CD8-positive, alpha-beta T cell (primary cell): ENCODE measurements at regions of chr5 and their contacts with region 1.

Region 1: DNA sequence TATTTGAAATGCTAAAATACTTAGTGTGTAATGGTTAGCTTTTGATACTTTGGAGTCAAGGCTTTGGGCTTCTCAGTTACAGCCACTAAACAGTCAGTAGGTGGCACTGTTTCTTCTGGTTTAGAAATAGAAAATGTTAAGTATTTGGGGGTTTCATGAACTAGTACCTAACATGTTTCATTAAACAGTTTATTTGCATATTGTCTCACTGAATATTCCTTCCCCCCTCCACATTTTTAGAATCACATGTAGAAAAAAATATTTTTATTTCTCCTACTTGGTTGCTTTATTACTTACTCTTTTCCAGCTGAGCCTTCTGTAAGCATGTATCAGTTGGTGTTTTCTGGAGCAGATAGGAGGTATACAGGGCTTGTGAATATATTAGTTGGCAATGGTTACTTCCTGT is 48.0 kb downstream of the IPO11 start:
- DNase-seq: peak in 2 of 9 experiments; percentile 45 to 54
- ATAC-seq: no peak
- H3K4me3 ChIP-seq: no peak overlapping the region
- H3K4me3 Mint-ChIP-seq: no peak overlapping the region
- H3K27ac ChIP-seq: no peak overlapping the region
- H3K27ac Mint-ChIP-seq: no peak overlapping the region
- H3K4me1 ChIP-seq: no peaks in the 10 kb centered on the region
- H3K4me1 Mint-ChIP-seq: peaks cover 3% of the 10 kb centered on the region
- H3K27me3 ChIP-seq: no peaks in the 10 kb centered on the region
- H3K27me3 Mint-ChIP-seq: no peaks in the 10 kb centered on the region
- CTCF ChIP-seq: peak; percentile 82

Region 2: DNA sequence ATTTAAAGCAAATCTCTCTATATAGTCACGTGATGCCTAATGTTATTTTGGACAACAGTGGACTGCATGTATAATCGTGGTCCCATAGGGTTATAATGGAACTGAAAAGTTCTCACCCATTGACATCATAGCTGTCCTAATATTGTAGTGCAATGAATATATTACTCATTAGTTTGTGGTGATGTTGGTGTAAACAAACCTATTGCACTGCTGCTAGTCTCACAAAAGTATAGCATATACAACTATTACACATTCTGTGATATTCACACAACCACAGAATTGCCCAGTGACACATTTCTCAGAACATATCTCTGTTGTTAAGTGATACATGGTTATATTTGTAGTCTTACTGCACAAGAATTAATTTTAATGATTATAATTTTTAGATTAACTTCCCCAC is 10.3 kb before region 1 on chr5:
- CTCF ChIA-PET with region 1: interaction called, 17 read pairs
- POLR2A ChIA-PET with region 1: interaction called, 3 read pairs
- intact Hi-C with region 1: no loop called
- DNase-seq: no peak
- ATAC-seq: no peak
- H3K4me3 ChIP-seq: no peak overlapping the region
- H3K4me3 Mint-ChIP-seq: no peak overlapping the region
- H3K27ac ChIP-seq: no peak overlapping the region
- H3K27ac Mint-ChIP-seq: no peak overlapping the region
- H3K4me1 ChIP-seq: no peaks in the 10 kb centered on the region
- H3K4me1 Mint-ChIP-seq: no peaks in the 10 kb centered on the region
- H3K27me3 ChIP-seq: no peaks in the 10 kb centered on the region
- H3K27me3 Mint-ChIP-seq: no peaks in the 10 kb centered on the region
- CTCF ChIP-seq: no peak

Region 3: DNA sequence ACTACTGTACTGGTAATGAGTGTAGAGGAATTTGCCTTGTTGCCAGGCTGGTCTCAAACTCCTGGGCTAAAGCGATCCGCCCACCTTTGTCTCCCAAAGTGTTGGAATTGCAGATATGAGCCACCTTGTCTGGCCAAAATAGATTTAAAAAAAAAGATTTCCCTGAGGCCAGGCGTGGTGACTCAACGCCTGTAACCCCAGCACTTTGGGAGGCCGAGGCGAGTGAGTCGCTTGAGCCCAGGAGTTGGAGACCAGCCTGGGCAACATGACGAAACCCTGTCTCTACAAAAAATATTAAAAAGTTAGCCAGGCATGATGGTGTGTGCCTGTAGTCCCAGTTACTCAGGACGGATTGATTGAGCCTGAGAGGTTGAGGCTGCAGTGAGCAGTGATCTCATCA is 14.5 kb after region 1 on chr5:
- CTCF ChIA-PET with region 1: interaction called, 14 read pairs
- POLR2A ChIA-PET with region 1: no interaction called
- intact Hi-C with region 1: no loop called
- DNase-seq: no peak
- ATAC-seq: no peak
- H3K4me3 ChIP-seq: no peak overlapping the region
- H3K4me3 Mint-ChIP-seq: no peak overlapping the region
- H3K27ac ChIP-seq: no peak overlapping the region
- H3K27ac Mint-ChIP-seq: no peak overlapping the region
- H3K4me1 ChIP-seq: no peaks in the 10 kb centered on the region
- H3K4me1 Mint-ChIP-seq: no peaks in the 10 kb centered on the region
- H3K27me3 ChIP-seq: no peaks in the 10 kb centered on the region
- H3K27me3 Mint-ChIP-seq: no peaks in the 10 kb centered on the region
- CTCF ChIP-seq: no peak

Region 4: GRCh38 chr5:62538017-62538942 is 77.7 kb after region 1 on chr5:
- CTCF ChIA-PET with region 1: no interaction called
- POLR2A ChIA-PET with region 1: no interaction called
- intact Hi-C with region 1: no loop called
- DNase-seq: peak in 1 of 9 experiments; percentile 3
- ATAC-seq: no peak
- H3K4me3 ChIP-seq: no peak overlapping the region
- H3K4me3 Mint-ChIP-seq: no peak overlapping the region
- H3K27ac ChIP-seq: no peak overlapping the region
- H3K27ac Mint-ChIP-seq: no peak overlapping the region
- H3K4me1 ChIP-seq: no peaks in the 10 kb centered on the region
- H3K4me1 Mint-ChIP-seq: no peaks in the 10 kb centered on the region
- H3K27me3 ChIP-seq: no peaks in the 10 kb centered on the region
- H3K27me3 Mint-ChIP-seq: no peaks in the 10 kb centered on the region
- CTCF ChIP-seq: no peak

Region 5: DNA sequence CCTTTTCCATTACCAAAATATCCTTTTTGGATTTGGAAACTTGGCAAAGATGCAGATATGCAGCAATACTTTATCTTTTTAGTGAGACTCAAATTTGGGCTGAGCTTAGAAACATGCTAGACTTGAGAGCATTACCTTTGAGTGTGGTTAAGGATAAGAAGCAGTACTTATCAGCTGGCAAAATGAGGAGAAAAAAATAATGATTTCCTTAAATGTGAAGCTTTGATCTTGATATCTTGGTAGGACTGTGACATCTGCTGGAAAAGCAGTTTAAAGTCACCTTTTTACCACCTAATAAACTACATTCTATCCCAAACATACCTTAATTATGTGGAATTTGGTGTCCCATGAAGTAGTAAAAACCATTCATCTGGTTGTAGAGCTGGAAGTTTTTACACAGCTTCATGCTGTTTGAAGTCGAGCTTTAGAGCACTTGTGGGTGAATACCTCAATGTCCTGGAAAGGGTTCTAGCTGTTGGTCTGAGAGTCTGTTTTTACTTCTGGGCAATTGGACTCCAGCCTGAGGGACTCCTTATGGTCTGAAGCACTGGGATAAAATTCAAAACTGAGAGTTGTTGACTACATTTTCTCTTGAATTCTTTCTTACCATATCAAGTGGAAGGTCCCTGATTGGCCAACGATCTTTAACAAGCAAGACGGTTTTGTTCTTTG is 171.5 kb after region 1 on chr5:
- CTCF ChIA-PET with region 1: no interaction called
- POLR2A ChIA-PET with region 1: no interaction called
- intact Hi-C with region 1: loop called (anchors 2 to 5 kb)
- DNase-seq: peak in 1 of 9 experiments; percentile 15
- ATAC-seq: no peak
- H3K4me3 ChIP-seq: no peak overlapping the region
- H3K4me3 Mint-ChIP-seq: no peak overlapping the region
- H3K27ac ChIP-seq: no peak overlapping the region
- H3K27ac Mint-ChIP-seq: no peak overlapping the region
- H3K4me1 ChIP-seq: no peaks in the 10 kb centered on the region
- H3K4me1 Mint-ChIP-seq: no peaks in the 10 kb centered on the region
- H3K27me3 ChIP-seq: no peaks in the 10 kb centered on the region
- H3K27me3 Mint-ChIP-seq: no peaks in the 10 kb centered on the region
- CTCF ChIP-seq: no peak

Region 6: DNA sequence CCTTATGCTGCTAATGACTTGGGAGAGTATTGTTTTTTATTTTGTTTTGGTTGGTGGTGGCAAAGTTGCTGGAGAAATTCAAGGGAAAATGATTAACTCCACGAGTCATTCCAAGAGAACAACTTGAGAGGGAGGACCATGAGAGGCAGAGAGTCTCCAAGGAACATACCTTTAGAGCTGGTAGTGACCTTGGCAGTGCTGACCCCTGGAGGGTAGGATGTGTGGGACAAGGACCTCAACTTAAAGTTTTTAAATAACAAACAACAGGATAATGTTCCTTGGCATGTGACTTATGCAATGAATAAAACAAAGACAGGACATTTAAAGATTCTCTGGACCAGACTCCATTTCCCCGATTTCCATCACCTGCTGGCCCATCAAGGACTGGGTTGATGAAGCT is 257.8 kb after region 1 on chr5:
- CTCF ChIA-PET with region 1: no interaction called
- POLR2A ChIA-PET with region 1: no interaction called
- intact Hi-C with region 1: loop called in 1 of 2 experiments (anchors 5 kb)
- DNase-seq: peak in 2 of 9 experiments; percentile 2
- ATAC-seq: no peak
- H3K4me3 ChIP-seq: no peak overlapping the region
- H3K4me3 Mint-ChIP-seq: no peak overlapping the region
- H3K27ac ChIP-seq: no peak overlapping the region
- H3K27ac Mint-ChIP-seq: no peak overlapping the region
- H3K4me1 ChIP-seq: no peaks in the 10 kb centered on the region
- H3K4me1 Mint-ChIP-seq: no peaks in the 10 kb centered on the region
- H3K27me3 ChIP-seq: no peaks in the 10 kb centered on the region
- H3K27me3 Mint-ChIP-seq: peaks cover 17% of the 10 kb centered on the region
- CTCF ChIP-seq: no peak

Region 7: GRCh38 chr5:62742207-62742606 is 281.6 kb after region 1 on chr5:
- CTCF ChIA-PET with region 1: no interaction called
- POLR2A ChIA-PET with region 1: no interaction called
- intact Hi-C with region 1: no loop called
- DNase-seq: no peak
- ATAC-seq: no peak
- H3K4me3 ChIP-seq: no peak overlapping the region
- H3K4me3 Mint-ChIP-seq: no peak overlapping the region
- H3K27ac ChIP-seq: no peak overlapping the region
- H3K27ac Mint-ChIP-seq: no peak overlapping the region
- H3K4me1 ChIP-seq: no peaks in the 10 kb centered on the region
- H3K4me1 Mint-ChIP-seq: no peaks in the 10 kb centered on the region
- H3K27me3 ChIP-seq: no peaks in the 10 kb centered on the region
- H3K27me3 Mint-ChIP-seq: no peaks in the 10 kb centered on the region
- CTCF ChIP-seq: no peak

Region 8: GRCh38 chr5:62779010-62779422 is 318.4 kb after region 1 on chr5:
- CTCF ChIA-PET with region 1: interaction called, 16 read pairs
- POLR2A ChIA-PET with region 1: no interaction called
- intact Hi-C with region 1: loop called (anchors 1 to 2 kb)
- DNase-seq: peak in 2 of 9 experiments; percentile 45 to 56
- ATAC-seq: no peak
- H3K4me3 ChIP-seq: no peak overlapping the region
- H3K4me3 Mint-ChIP-seq: no peak overlapping the region
- H3K27ac ChIP-seq: no peak overlapping the region
- H3K27ac Mint-ChIP-seq: no peak overlapping the region
- H3K4me1 ChIP-seq: no peaks in the 10 kb centered on the region
- H3K4me1 Mint-ChIP-seq: peaks cover 2% of the 10 kb centered on the region
- H3K27me3 ChIP-seq: no peaks in the 10 kb centered on the region
- H3K27me3 Mint-ChIP-seq: peaks cover 8% of the 10 kb centered on the region
- CTCF ChIP-seq: peak; percentile 67